H1 (cell line): ENCODE measurements at regions of chr2 and their contacts with region 1.

Region 1: DNA sequence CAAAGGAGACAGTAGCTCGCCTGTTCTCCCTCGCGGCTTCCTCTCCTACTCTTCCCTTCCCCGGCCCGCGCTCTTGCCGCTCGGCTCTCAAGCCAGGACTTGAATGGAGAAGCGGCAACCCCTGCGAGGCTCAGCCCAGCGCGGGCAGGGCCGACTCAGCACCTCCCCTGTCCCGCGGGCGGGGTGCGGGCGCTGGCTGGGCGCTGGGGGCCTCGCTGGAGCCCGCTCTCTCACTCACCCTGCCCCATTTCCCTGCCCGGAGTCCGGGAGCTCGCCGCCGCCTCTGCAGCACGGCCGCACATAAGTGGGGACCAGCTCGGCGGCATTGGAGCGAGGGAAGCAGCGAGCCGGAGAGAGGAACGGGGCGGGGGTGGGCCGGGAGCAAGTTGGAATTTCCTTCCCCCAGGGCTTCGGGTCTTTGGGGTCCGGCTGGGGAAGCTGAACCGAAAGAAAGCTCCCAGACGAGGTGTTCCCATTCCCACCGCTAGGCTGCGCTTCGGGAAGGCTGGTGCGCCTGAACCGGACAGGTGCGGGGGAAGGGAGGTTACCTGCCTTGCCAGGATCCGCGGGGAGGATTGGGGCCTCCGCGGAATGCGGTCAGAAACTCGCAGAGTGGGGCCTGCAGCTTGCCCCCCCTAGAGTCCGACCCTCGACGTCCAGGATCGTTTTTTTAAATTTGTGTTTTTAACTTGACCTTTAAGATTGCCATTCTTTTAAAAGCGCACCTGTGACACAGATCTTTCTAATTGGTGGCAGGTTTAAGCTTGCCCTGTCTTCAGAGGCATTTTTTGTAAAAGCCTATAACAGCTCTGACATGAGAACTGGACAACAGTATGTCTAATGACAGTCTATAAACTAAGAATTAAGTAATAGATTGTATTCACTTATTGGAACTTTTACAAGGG is at the start of gene COBLL1:
- DNase-seq: peak in 1 of 2 experiments; percentile 93
- H3K4me3 ChIP-seq: peak within 1 kb of the TSS; percentile 73 to 83 (median 78)
- H3K27ac ChIP-seq: no peak within 1 kb of the TSS; the same call in 1 of the 2 replicates
- H3K4me1 ChIP-seq: peaks cover 0 to 3% (median 1%) of the 10 kb centered on the region in 4 experiments; a peak in 2 of 7 replicates
- H3K27me3 ChIP-seq: peaks cover 0 to 6% (median 0%) of the 10 kb centered on the region in 4 experiments; a peak in 1 of 7 replicates
- CTCF ChIP-seq: peak; percentile 73 to 89 (median 74)
- EP300 ChIP-seq: no peak
- POLR2A ChIP-seq: no peak
- RAD21 ChIP-seq: peak; percentile 42 to 56
- total RNA-seq, gene COBLL1: 5.2 and 6.2 TPM in 2 replicates

Region 2: DNA sequence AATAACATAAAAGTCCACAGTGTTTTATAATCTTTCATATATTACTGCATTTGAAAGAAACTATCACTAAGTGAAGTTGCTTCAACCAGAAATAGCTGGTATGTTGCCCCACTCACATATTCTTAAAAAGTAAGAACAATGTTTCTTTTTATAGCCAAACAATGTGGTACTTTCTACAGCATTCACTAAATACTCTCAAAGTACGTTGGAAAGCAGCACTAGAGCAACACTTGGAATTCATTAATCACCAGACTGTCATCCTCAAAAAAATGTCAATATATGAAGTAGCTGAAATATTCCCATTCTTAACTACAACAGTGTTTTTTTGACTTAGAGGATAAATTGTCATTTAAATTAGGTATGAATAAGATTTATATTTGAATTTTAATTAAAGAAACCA is 33.2 kb before region 1 on chr2:
- CTCF ChIA-PET with region 1: interaction called, 15 read pairs
- POLR2A ChIA-PET with region 1: no interaction called
- DNase-seq: no peak
- H3K4me3 ChIP-seq: no peak overlapping the region
- H3K27ac ChIP-seq: no peak overlapping the region
- H3K4me1 ChIP-seq: no peaks in the 10 kb centered on the region
- H3K27me3 ChIP-seq: no peaks in the 10 kb centered on the region
- CTCF ChIP-seq: no peak
- EP300 ChIP-seq: no peak
- POLR2A ChIP-seq: no peak
- RAD21 ChIP-seq: no peak

Region 3: GRCh38 chr2:164831887-164832286 is 10.1 kb before region 1 on chr2:
- CTCF ChIA-PET with region 1: interaction called, 27 read pairs
- POLR2A ChIA-PET with region 1: interaction called, 10 read pairs
- DNase-seq: no peak
- H3K4me3 ChIP-seq: no peak overlapping the region
- H3K27ac ChIP-seq: no peak overlapping the region
- H3K4me1 ChIP-seq: no peaks in the 10 kb centered on the region
- H3K27me3 ChIP-seq: no peaks in the 10 kb centered on the region
- CTCF ChIP-seq: no peak
- EP300 ChIP-seq: no peak
- POLR2A ChIP-seq: no peak
- RAD21 ChIP-seq: no peak

Region 4: GRCh38 chr2:164859251-164859800 is 17.4 kb after region 1 on chr2:
- CTCF ChIA-PET with region 1: interaction called, 35 read pairs
- POLR2A ChIA-PET with region 1: interaction called, 3 read pairs
- DNase-seq: no peak
- H3K4me3 ChIP-seq: no peak overlapping the region
- H3K27ac ChIP-seq: no peak overlapping the region
- H3K4me1 ChIP-seq: no peaks in the 10 kb centered on the region
- H3K27me3 ChIP-seq: no peaks in the 10 kb centered on the region
- CTCF ChIP-seq: no peak
- EP300 ChIP-seq: no peak
- POLR2A ChIP-seq: no peak
- RAD21 ChIP-seq: no peak

Region 5: DNA sequence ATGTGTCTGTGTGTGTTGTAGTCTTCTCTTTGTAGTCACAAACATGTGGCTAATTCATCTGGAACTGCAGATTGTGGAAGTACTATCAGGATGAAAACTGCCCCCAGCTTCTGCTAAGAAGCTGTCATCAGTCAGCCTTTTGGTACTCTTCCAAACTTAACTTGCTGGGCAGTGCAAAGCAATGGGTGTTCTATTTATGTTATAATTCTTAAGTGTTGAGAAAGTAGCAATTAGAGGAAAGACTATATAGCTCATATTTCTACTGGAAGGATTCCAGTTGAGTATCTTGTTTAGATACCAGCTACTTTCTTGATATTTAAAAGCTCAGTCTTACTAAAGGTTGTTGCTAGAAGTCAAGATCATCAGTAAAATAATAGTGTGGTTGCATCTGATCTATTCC is 61.2 kb after region 1 on chr2:
- CTCF ChIA-PET with region 1: interaction called, 11 read pairs
- POLR2A ChIA-PET with region 1: no interaction called
- DNase-seq: no peak
- H3K4me3 ChIP-seq: no peak overlapping the region
- H3K27ac ChIP-seq: no peak overlapping the region
- H3K4me1 ChIP-seq: peaks cover 0 to 2% (median 0%) of the 10 kb centered on the region in 4 experiments; a peak in 1 of 7 replicates
- H3K27me3 ChIP-seq: no peaks in the 10 kb centered on the region
- CTCF ChIP-seq: no peak
- EP300 ChIP-seq: no peak
- POLR2A ChIP-seq: no peak
- RAD21 ChIP-seq: no peak